Panc1 (cell line): ENCODE measurements at regions of chr3 and their contacts with region 1.

Region 1: GRCh38 chr3:69120879-69121464 is 1.4 kb downstream of the LMOD3 start:
- DNase-seq: peak; percentile 79
- ATAC-seq: peak; percentile 84
- H3K4me3 ChIP-seq: no peak overlapping the region
- H3K27ac ChIP-seq: no peak overlapping the region
- H3K4me1 ChIP-seq: no peaks in the 10 kb centered on the region
- H3K27me3 ChIP-seq: no peaks in the 10 kb centered on the region
- CTCF ChIP-seq: peak; percentile 83

Region 2: DNA sequence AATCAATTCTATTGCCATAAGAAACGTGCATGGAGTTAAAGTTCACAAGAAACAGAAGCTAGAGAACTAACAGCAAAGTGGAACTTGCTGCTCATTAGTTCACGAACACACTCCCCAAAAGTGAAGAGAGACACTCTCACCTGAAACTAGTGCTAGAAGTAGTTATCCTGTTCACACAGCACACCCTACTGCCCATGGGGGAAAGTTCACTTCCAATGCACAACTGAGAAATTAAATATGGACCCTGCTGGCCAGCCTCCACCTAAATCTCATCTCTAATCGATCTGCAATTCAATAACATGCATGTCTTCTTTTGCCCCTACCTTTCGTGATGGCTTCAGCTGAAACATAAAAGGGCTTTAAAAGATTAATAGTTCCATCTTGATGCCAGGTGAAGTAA is 304.3 kb after region 1 on chr3:
- CTCF ChIA-PET with region 1: interaction called, 3 read pairs
- POLR2A ChIA-PET with region 1: no interaction called
- in situ Hi-C with region 1: no loop called
- intact Hi-C with region 1: loop called (anchors 10 kb)
- DNase-seq: peak; percentile 17
- ATAC-seq: peak; percentile 78; the same call in 1 of the 2 replicates
- H3K4me3 ChIP-seq: no peak overlapping the region
- H3K27ac ChIP-seq: no peak overlapping the region
- H3K4me1 ChIP-seq: no peaks in the 10 kb centered on the region
- H3K27me3 ChIP-seq: no peaks in the 10 kb centered on the region
- CTCF ChIP-seq: peak; percentile 60

Region 3: GRCh38 chr3:69671082-69671952 is 550.3 kb after region 1 on chr3:
- CTCF ChIA-PET with region 1: no interaction called
- POLR2A ChIA-PET with region 1: no interaction called
- in situ Hi-C with region 1: no loop called
- intact Hi-C with region 1: loop called (anchors 5 kb)
- DNase-seq: no peak
- ATAC-seq: no peak
- H3K4me3 ChIP-seq: no peak overlapping the region
- H3K27ac ChIP-seq: no peak overlapping the region
- H3K4me1 ChIP-seq: no peaks in the 10 kb centered on the region
- H3K27me3 ChIP-seq: no peaks in the 10 kb centered on the region
- CTCF ChIP-seq: peak; percentile 69; the same call in 1 of the 2 replicates

Region 4: DNA sequence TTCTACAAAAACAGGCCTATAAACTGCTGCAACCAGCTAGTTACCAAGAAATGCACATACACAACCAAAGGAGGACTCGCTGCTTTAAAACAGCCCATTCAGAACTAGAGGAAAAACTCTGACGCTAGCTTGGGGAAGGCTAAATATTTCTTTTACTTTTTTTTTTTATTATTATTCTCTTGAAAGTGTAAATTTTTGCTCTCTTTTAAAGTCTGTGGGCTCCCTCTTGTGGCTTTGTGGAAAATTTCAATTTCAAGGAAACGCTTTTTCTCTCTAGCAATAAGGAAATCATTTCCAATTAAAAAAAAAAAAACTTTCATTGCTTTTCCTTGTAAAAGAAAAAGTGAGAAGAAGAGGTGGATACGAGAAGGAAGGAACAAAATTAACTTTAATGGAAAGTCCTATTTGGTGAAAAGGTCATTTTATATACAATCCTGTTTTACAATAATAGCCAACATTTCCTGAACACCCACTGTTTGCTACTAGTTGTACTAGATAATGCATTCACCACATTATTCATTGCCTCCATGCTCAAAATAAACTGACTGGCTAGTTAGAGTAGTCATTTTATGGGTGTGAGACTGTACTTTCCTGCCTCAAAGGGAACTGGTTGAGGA is 827.4 kb after region 1 on chr3:
- CTCF ChIA-PET with region 1: no interaction called
- POLR2A ChIA-PET with region 1: no interaction called
- in situ Hi-C with region 1: no loop called
- intact Hi-C with region 1: loop called (anchors 10 kb)
- DNase-seq: no peak
- ATAC-seq: no peak
- H3K4me3 ChIP-seq: no peak overlapping the region
- H3K27ac ChIP-seq: no peak overlapping the region
- H3K4me1 ChIP-seq: no peaks in the 10 kb centered on the region
- H3K27me3 ChIP-seq: no peaks in the 10 kb centered on the region
- CTCF ChIP-seq: peak; percentile 60; the same call in 1 of the 2 replicates